ENCODE measurements at regions of chr20 and their contacts with region 1.

Region 1: GRCh38 chr20:32031007-32031958 is 20.8 kb upstream of the HCK start:
- DNase-seq: peak; percentile 94
- H3K4me3 ChIP-seq: peak overlapping the region; percentile 22 to 37 (median 33)
- H3K27ac ChIP-seq: no peak overlapping the region
- H3K4me1 ChIP-seq: peaks cover 6 to 12% (median 11%) of the 10 kb centered on the region in 4 donors
- H3K27me3 ChIP-seq: peaks cover 0 to 49% (median 6%) of the 10 kb centered on the region in 4 donors
- CTCF ChIP-seq: peak; percentile 71 to 79 (median 72)
- EP300 ChIP-seq: no peak
- POLR2A ChIP-seq: no peak

Region 2: GRCh38 chr20:31822421-31823330 is 208.6 kb before region 1 on chr20:
- intact Hi-C with region 1: loop called (anchors 5 kb)
- DNase-seq: no peak
- H3K4me3 ChIP-seq: peak overlapping the region in 3 of 4 donors; percentile 2 to 17 (median 15)
- H3K27ac ChIP-seq: no peak overlapping the region
- H3K4me1 ChIP-seq: peaks cover 4 to 15% (median 12%) of the 10 kb centered on the region in 4 donors
- H3K27me3 ChIP-seq: no peaks in the 10 kb centered on the region
- CTCF ChIP-seq: peak; percentile 97 to 100 (median 99)
- EP300 ChIP-seq: no peak
- POLR2A ChIP-seq: no peak

Region 3: DNA sequence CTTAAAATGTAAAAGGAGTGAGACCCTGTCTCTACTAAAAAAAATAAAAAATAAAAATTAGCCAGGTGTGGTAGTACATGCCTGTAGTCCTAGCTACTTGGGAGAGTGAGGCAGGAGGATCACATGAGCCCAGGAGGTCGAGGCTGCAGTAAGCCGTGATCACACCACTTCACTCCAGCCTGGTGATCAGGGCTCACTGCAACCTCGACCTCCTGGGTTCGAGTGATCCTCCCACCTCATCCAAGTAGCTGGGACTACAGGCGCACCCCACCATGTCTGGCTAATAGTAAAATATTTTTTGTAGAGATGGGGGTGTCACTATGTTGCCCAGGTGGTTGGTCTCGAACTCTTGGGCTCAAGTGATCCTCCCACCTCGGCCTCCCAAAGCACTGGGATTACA is 177.8 kb before region 1 on chr20:
- intact Hi-C with region 1: loop called (anchors 2 kb)
- DNase-seq: no peak
- H3K4me3 ChIP-seq: no peak overlapping the region
- H3K27ac ChIP-seq: no peak overlapping the region
- H3K4me1 ChIP-seq: peaks cover 0 to 7% (median 6%) of the 10 kb centered on the region in 4 donors
- H3K27me3 ChIP-seq: peaks cover 0 to 88% (median 3%) of the 10 kb centered on the region in 4 donors
- CTCF ChIP-seq: no peak
- EP300 ChIP-seq: no peak
- POLR2A ChIP-seq: no peak

Region 4: GRCh38 chr20:31943052-31943471 is 88.2 kb before region 1 on chr20:
- intact Hi-C with region 1: loop called (anchors 10 kb)
- DNase-seq: no peak
- H3K4me3 ChIP-seq: no peak overlapping the region
- H3K27ac ChIP-seq: peak overlapping the region in 2 of 4 donors; percentile 14 to 50
- H3K4me1 ChIP-seq: peaks cover 10 to 23% (median 17%) of the 10 kb centered on the region in 4 donors
- H3K27me3 ChIP-seq: no peaks in the 10 kb centered on the region
- CTCF ChIP-seq: no peak
- EP300 ChIP-seq: no peak
- POLR2A ChIP-seq: no peak

Region 5: DNA sequence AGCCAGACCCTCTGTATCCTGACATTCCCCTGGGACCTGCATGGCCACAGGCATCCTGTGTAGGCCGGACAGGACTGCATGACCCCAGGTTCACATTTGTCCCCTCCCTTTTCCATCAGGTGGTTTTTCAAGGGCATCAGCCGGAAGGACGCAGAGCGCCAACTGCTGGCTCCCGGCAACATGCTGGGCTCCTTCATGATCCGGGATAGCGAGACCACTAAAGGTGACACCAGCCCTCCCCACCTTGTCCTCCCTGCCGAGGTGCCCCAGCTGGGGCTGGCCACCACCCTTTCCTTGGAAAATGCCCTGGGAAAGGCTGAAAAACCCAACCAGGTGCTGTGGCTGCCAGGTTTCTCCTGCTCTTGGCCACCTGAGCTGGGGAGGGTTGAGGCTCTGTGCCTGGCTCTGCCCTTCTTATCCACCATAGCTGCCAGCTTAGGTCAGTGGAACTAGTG is 48.4 kb after region 1 on chr20:
- intact Hi-C with region 1: no loop called
- DNase-seq: no peak
- H3K4me3 ChIP-seq: no peak overlapping the region
- H3K27ac ChIP-seq: no peak overlapping the region
- H3K4me1 ChIP-seq: no peaks in the 10 kb centered on the region
- H3K27me3 ChIP-seq: peaks cover 0 to 63% (median 1%) of the 10 kb centered on the region in 4 donors
- CTCF ChIP-seq: no peak
- EP300 ChIP-seq: no peak
- POLR2A ChIP-seq: no peak

Measured in esophagus muscularis mucosa (tissue), 4 donors.